Dendritic cell treated with granulocyte-macrophage colony-stimulating factor and Interleukin-4, amounts not matched to agents 40 ng/mL and 50 ng/mL, for 4 days (primary cell): ENCODE measurements at regions of chr11 and their contacts with region 1.

Region 1: GRCh38 chr11:119356349-119357031 is 10.0 kb upstream of the MFRP start:
- H3K4me3 Mint-ChIP-seq: peak overlapping the region; percentile 80
- H3K27ac Mint-ChIP-seq: peak overlapping the region; percentile 50
- H3K4me1 Mint-ChIP-seq: peaks cover 28% of the 10 kb centered on the region
- H3K27me3 Mint-ChIP-seq: peaks cover 62% of the 10 kb centered on the region

Region 2: GRCh38 chr11:119373921-119374631 is 17.6 kb after region 1 on chr11:
- intact Hi-C with region 1: loop called (anchors 1 kb)
- H3K4me3 Mint-ChIP-seq: no peak overlapping the region
- H3K27ac Mint-ChIP-seq: no peak overlapping the region
- H3K4me1 Mint-ChIP-seq: no peaks in the 10 kb centered on the region
- H3K27me3 Mint-ChIP-seq: peaks cover 23% of the 10 kb centered on the region

Region 3: GRCh38 chr11:119381181-119381988 is 24.9 kb after region 1 on chr11 and contains the start of gene USP2:
- intact Hi-C with region 1: loop called (anchors 1 kb)
- H3K4me3 Mint-ChIP-seq: no peak within 1 kb of the TSS
- H3K27ac Mint-ChIP-seq: no peak within 1 kb of the TSS
- H3K4me1 Mint-ChIP-seq: no peaks in the 10 kb centered on the region
- H3K27me3 Mint-ChIP-seq: peaks cover 23% of the 10 kb centered on the region

Region 4: GRCh38 chr11:119474682-119475596 is 118.4 kb after region 1 on chr11:
- intact Hi-C with region 1: loop called (anchors 2 kb)
- H3K4me3 Mint-ChIP-seq: no peak overlapping the region
- H3K27ac Mint-ChIP-seq: peak overlapping the region; percentile 21
- H3K4me1 Mint-ChIP-seq: peaks cover 6% of the 10 kb centered on the region
- H3K27me3 Mint-ChIP-seq: peaks cover 33% of the 10 kb centered on the region